BJ (cell line): ENCODE measurements at regions of chr2 and their contacts with region 1.

Region 1: GRCh38 chr2:66434679-66435548 is at the start of gene MEIS1:
- DNase-seq: peak; percentile 96
- H3K4me3 ChIP-seq: peak within 1 kb of the TSS; percentile 85
- H3K27me3 ChIP-seq: no peaks in the 10 kb centered on the region
- CTCF ChIP-seq: no peak
- polyA plus RNA-seq, gene MEIS1: 57.4 and 65.7 TPM in 2 replicates

Region 2: GRCh38 chr2:65866148-65866547 is 568.8 kb before region 1 on chr2:
- CTCF ChIA-PET with region 1: no interaction called
- POLR2A ChIA-PET with region 1: interaction called, 17 read pairs
- DNase-seq: no peak
- H3K4me3 ChIP-seq: no peak overlapping the region
- H3K27me3 ChIP-seq: 0 out of 2 replicates have a peak, but pooled peaks cover 4% of the 10 kb centered on the region
- CTCF ChIP-seq: no peak

Region 3: GRCh38 chr2:66414896-66415295 is 20.0 kb before region 1 on chr2:
- CTCF ChIA-PET with region 1: no interaction called
- POLR2A ChIA-PET with region 1: no interaction called
- DNase-seq: no peak
- H3K4me3 ChIP-seq: no peak overlapping the region
- H3K27me3 ChIP-seq: no peaks in the 10 kb centered on the region; the same call in 1 of the 2 replicates
- CTCF ChIP-seq: no peak

Region 4: GRCh38 chr2:66445925-66446860 is 11.3 kb after region 1 on chr2:
- CTCF ChIA-PET with region 1: interaction called, 4 read pairs
- POLR2A ChIA-PET with region 1: interaction called, 15 read pairs
- DNase-seq: no peak
- H3K4me3 ChIP-seq: peak overlapping the region; percentile 50
- H3K27me3 ChIP-seq: no peaks in the 10 kb centered on the region
- CTCF ChIP-seq: peak; percentile 16; the same call in 1 of the 2 replicates

Region 5: GRCh38 chr2:66574701-66575624 is 140.0 kb after region 1 on chr2:
- CTCF ChIA-PET with region 1: interaction called, 22 read pairs
- POLR2A ChIA-PET with region 1: interaction called, 5 read pairs
- DNase-seq: no peak
- H3K4me3 ChIP-seq: peak overlapping the region; percentile 55
- H3K27me3 ChIP-seq: no peaks in the 10 kb centered on the region
- CTCF ChIP-seq: peak; percentile 59

Region 6: GRCh38 chr2:66601624-66602023 is 166.7 kb after region 1 on chr2:
- CTCF ChIA-PET with region 1: no interaction called
- POLR2A ChIA-PET with region 1: interaction called, 14 read pairs
- DNase-seq: no peak
- H3K4me3 ChIP-seq: no peak overlapping the region
- H3K27me3 ChIP-seq: no peaks in the 10 kb centered on the region
- CTCF ChIP-seq: no peak

Region 7: DNA sequence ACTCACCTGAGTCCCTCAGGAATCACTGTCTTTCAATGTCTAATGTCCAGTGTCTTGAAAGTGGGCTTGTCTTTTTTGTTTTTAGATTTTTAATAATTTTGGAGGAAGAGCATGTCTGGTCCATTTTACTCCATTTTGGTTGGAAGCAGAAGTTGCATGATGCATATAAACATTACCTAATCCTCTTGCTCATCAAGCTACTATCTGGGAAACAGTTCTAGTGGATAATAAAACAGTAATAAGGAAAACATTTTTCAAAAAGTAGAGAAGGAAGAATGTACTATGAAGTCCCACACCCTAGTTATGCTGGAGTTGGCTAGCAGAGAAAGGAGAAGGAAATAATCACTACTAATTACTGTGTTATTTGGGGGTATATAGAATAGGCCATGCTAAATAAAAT is 1226.0 kb after region 1 on chr2:
- CTCF ChIA-PET with region 1: no interaction called
- POLR2A ChIA-PET with region 1: interaction called, 11 read pairs
- DNase-seq: no peak
- H3K4me3 ChIP-seq: no peak overlapping the region
- H3K27me3 ChIP-seq: no peaks in the 10 kb centered on the region
- CTCF ChIP-seq: no peak